ENCODE measurements at regions of chr3 and their contacts with region 1.

Region 1: GRCh38 chr3:185929192-185930151 is 8.3 kb downstream of the TRA2B start:
- DNase-seq: no peak
- H3K4me3 Mint-ChIP-seq: peak overlapping the region; percentile 68
- H3K27ac Mint-ChIP-seq: peak overlapping the region; percentile 65
- H3K4me1 Mint-ChIP-seq: peaks cover 98% of the 10 kb centered on the region
- H3K27me3 Mint-ChIP-seq: no peaks in the 10 kb centered on the region

Region 2: DNA sequence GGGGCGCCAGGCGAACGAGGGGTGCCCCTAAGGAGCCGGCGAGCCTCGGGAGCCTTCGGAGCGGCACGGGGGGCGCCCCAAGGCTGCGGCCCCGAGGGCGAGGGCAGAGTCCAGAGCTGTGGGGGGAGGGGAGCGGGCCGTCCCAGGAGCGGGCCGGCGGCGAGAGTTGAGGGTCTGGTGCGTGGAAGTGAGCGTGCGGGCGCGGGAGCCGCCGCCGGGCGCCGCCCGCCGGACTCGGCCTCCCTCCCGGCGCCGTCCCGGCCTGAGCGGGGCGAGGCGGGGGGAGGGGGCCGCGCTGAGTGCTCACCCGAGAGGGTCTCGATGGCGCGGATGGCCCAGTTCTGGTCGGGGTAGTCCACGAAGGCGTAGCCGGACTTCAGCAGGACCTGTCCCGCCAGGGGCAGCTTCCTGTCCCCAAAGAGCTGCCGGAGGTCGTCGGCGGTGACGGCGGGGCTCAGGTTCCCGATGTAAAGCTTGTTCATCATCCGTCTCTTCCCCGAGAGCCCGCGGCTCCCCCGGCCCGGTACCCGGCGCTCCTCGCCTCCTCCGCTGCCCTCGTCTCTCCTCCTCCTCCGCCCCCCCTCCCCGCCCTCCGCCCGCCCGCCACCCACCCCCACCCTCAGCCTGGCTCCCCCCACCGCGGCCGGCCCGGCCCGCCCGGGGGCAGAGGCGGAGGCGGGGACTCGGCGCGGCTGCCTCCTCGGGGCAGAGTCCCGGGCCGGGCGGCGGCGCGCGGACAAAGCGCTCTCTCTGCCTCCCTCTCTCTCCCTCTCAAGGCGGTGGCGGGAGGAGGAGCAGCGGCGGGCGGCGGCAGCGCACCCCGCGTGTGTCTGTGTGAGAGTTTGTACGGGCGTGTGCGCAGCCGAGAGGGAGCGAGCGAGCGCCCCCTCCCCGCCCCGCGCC is 104.7 kb before region 1 on chr3 and contains the start of gene IGF2BP2:
- intact Hi-C with region 1: loop called (anchors 5 kb)
- DNase-seq: peak; percentile 35
- H3K4me3 Mint-ChIP-seq: peak within 1 kb of the TSS; percentile 83
- H3K27ac Mint-ChIP-seq: no peak within 1 kb of the TSS
- H3K4me1 Mint-ChIP-seq: peaks cover 18% of the 10 kb centered on the region
- H3K27me3 Mint-ChIP-seq: peaks cover 74% of the 10 kb centered on the region
- total RNA-seq, gene IGF2BP2: 0.42 and 0.62 TPM in 2 replicates

Region 3: GRCh38 chr3:186287711-186288110 is 358.2 kb after region 1 on chr3:
- intact Hi-C with region 1: no loop called
- DNase-seq: no peak
- H3K4me3 Mint-ChIP-seq: no peak overlapping the region
- H3K27ac Mint-ChIP-seq: no peak overlapping the region
- H3K4me1 Mint-ChIP-seq: no peaks in the 10 kb centered on the region
- H3K27me3 Mint-ChIP-seq: peaks cover 12% of the 10 kb centered on the region